ENCODE measurements at regions of chr5 and their contacts with region 1.

Region 1: DNA sequence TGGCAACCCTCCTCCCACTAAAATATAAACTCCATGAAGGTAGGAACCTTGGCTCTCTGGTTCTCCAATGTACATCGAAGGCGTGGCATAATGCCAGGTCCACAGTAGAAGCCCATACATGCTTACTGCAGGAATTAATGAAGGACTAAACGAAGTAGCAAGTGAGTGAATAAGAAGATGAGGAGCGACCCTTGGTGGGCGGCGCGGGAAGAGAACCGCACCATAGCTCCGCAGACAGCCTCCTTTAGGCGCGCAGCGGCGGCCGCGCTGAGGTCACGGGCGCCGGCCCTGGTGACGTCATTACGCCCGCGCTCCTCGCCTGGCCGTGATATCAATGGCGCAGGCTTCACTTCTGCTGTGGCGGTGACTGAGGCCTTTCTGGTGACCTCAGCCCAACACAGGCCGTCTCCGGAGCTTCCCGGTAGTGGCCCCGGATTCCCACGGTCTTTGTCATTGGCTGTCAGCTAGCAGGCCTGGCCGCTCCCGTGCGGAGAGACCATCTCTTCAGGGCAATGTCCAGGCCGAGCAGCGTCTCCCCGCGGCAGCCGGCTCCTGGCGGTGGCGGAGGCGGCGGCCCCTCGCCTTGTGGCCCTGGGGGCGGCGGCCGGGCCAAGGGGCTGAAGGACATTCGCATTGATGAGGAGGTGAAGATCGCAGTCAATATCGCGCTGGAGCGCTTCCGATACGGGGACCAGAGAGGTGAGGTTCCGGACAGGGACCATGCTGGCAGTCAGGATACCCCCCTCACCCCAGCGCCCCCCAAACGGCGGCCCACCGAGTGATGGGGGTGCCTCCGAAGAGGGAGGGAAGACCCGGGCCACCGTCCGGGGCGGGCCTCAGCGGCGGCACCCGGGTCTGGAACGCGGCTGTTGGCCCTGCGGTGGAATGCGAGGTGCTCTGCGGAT is at the start of gene YTHDC2:
- DNase-seq: peak; percentile 49 to 94
- H3K4me3 ChIP-seq: peak within 1 kb of the TSS; percentile 78
- H3K27ac ChIP-seq: peak within 1 kb of the TSS; percentile 97 to 98
- H3K4me1 ChIP-seq: peaks cover 0 to 5% of the 10 kb centered on the region in 2 donors
- H3K27me3 ChIP-seq: no peaks in the 10 kb centered on the region
- CTCF ChIP-seq: peak in 1 of 3 experiments; percentile 6
- total RNA-seq, gene YTHDC2: 8.3 TPM

Region 2: DNA sequence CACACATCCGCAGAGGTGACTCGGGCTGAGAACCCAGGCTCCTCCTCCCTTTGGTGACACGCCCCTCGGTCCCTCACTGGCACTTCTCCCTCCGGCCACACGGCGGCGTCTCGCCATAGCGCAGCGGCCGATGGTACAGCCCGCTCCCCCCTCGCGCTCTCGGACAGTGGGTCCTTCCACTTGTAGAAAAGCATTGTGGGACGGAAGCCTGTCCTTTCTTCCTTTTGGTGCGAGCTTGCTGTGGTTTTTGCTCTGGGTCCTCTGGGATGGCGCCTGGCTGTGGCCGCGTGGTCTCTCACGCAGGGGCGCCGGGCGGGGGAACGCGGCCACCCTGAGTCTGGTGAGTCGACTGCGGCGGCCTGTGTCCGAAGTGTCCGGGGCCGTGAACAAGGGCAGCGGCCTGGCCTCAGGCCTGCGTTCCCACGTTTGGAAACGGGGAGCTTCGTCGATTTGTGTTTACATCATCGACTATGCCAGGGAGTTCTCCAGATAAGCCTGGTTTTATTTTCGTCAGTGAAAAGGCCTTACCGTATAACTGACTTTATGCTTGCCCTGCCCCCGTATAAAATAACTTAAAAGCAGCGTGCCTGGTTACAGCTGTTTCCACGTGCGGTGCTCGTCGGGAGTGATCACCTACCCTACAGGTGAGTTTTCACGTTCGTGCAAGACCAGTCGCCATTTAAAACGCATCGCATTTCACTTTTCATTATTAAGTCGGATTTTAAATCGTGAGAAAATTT is 1352.8 kb before region 1 on chr5:
- intact Hi-C with region 1: loop called (anchors 5 kb)
- DNase-seq: peak; percentile 70 to 96
- H3K4me3 ChIP-seq: peak overlapping the region; percentile 69 to 78
- H3K27ac ChIP-seq: peak overlapping the region; percentile 64 to 77
- H3K4me1 ChIP-seq: peaks cover 4 to 14% of the 10 kb centered on the region in 2 donors
- H3K27me3 ChIP-seq: no peaks in the 10 kb centered on the region
- CTCF ChIP-seq: peak; percentile 94 to 95 (median 95)

Region 3: GRCh38 chr5:112995764-112996618 is 517.6 kb before region 1 on chr5:
- intact Hi-C with region 1: loop called (anchors 5 kb)
- DNase-seq: peak in 1 of 2 donors; percentile 85
- H3K4me3 ChIP-seq: no peak overlapping the region
- H3K27ac ChIP-seq: no peak overlapping the region
- H3K4me1 ChIP-seq: peaks cover 0 to 4% of the 10 kb centered on the region in 2 donors
- H3K27me3 ChIP-seq: no peaks in the 10 kb centered on the region
- CTCF ChIP-seq: peak; percentile 63 to 92 (median 90)

Region 4: GRCh38 chr5:113081881-113082546 is 431.6 kb before region 1 on chr5:
- intact Hi-C with region 1: loop called (anchors 10 kb)
- DNase-seq: no peak
- H3K4me3 ChIP-seq: no peak overlapping the region
- H3K27ac ChIP-seq: no peak overlapping the region
- H3K4me1 ChIP-seq: peaks cover 0 to 2% of the 10 kb centered on the region in 2 donors
- H3K27me3 ChIP-seq: no peaks in the 10 kb centered on the region
- CTCF ChIP-seq: no peak

Region 5: DNA sequence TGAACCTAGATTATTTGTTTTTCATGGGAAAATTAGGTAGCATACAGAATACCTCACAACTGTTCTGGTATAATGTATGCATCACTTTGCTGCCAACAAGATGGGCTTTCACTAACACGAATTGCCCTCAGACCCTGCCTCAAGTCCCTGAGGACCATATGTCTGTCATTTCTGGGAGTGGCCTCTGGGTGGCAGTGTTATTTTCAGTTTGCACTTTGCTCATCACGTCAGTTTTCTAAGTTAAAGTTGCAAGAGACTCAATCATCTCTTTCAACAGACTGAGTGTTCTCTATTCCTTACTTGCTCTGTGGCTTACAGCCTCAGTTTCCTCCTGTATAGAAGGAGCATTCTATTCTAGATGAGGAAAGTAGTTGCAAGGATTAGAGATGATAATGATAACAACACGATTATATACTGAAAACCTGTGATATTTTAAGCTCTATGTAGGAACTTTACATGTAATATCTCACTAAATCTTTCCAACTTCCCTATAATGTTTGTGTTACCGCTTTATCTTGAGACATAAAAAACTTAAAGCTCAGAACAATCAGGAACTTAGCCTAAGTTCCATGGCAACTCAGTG is 134.6 kb before region 1 on chr5:
- intact Hi-C with region 1: loop called (anchors 2 kb)
- DNase-seq: peak in 1 of 2 donors; percentile 70
- H3K4me3 ChIP-seq: no peak overlapping the region
- H3K27ac ChIP-seq: no peak overlapping the region
- H3K4me1 ChIP-seq: no peaks in the 10 kb centered on the region
- H3K27me3 ChIP-seq: no peaks in the 10 kb centered on the region
- CTCF ChIP-seq: peak; percentile 46 to 74 (median 52)

Region 6: GRCh38 chr5:113487781-113488644 is 25.6 kb before region 1 on chr5 and contains the start of gene MCC:
- intact Hi-C with region 1: loop called (anchors 1 kb)
- DNase-seq: peak in 1 of 2 donors; percentile 81
- H3K4me3 ChIP-seq: peak within 1 kb of the TSS; percentile 55 to 69
- H3K27ac ChIP-seq: peak within 1 kb of the TSS in 1 of 2 donors; percentile 31
- H3K4me1 ChIP-seq: peaks cover 3 to 8% of the 10 kb centered on the region in 2 donors
- H3K27me3 ChIP-seq: no peaks in the 10 kb centered on the region
- CTCF ChIP-seq: no peak
- total RNA-seq, gene MCC: 67.9 TPM

Region 7: DNA sequence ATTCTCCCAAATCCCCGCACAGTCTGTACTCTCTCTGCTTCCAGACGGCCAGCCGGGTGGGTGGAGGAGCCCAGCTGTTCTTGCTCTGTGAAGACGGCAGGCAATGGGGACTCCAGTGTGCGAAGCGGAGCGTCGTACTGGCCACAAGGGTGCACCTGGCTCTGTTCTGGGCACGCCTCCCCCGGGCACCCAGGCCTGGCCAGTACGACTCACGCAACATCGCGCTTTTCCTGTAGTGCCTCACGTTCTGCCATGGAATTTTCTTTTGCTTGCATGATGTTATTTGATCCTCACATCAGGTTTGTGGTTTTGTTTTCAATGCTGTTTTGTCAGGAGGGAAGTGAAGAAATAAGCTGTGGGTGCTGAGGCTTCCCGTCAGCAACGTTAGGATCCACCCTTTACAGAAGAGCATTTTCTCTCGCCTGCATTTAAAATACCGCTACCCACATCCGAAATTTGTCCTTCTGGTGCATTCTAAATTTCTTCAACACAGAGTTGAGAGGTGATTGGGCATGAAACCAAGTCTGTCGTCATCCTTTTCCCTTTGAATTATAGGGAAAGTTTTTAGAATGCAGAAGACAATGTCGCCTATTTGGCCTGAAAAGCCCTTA is 1344.4 kb after region 1 on chr5:
- intact Hi-C with region 1: no loop called
- DNase-seq: no peak
- H3K4me3 ChIP-seq: no peak overlapping the region
- H3K27ac ChIP-seq: no peak overlapping the region
- H3K4me1 ChIP-seq: no peaks in the 10 kb centered on the region
- H3K27me3 ChIP-seq: no peaks in the 10 kb centered on the region
- CTCF ChIP-seq: no peak